Heart left ventricle (tissue), 16 donors: ENCODE measurements at regions of chr19 and their contacts with region 1.

Region 1: DNA sequence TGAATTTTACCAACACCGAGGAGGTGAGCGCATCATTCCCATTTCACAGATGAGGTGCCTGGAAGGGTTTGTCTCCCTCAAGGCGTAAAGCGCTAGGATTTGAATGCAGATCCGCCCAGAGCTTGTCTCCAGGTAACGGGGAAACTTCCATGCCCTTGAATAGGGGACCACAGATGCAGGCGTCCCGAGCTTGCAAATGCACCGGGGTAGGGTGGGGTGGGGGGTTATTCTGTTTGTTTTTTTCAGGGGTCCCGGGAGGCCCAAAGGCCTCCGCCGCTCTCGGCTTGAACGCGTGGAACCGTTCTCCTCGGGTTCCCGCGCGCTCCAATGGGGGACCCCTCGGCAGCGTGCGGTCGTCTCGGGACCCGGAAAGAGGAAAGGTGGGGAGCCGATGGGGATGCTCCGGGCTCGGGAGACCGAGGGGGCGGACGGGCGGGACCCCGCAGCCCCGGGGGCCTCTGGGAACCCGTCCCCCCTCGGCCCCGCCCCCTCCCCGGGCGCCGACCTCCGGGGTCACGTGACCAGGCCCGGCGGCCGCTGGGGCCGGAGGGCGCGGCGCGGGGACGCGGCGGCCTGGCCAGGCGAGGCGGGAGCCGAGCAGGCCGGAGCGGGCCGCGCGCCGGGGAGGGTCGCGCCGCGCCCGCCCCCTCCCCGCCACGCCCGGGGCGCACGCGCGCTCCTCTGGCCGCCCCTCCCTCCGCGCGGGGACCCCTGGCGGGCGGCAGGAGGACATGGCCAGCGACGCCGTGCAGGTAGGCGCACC is at the start of gene PKN1:
- DNase-seq: peak; percentile 71 to 84 (median 79)
- ATAC-seq: peak; percentile 15 to 65 (median 48)
- H3K4me3 ChIP-seq: peak within 1 kb of the TSS; percentile 72 to 98 (median 90)
- H3K27ac ChIP-seq: peak within 1 kb of the TSS; percentile 74 to 98 (median 93)
- H3K4me1 ChIP-seq: peaks cover 0 to 58% (median 32%) of the 10 kb centered on the region in 12 donors
- H3K27me3 ChIP-seq: no peaks in the 10 kb centered on the region
- CTCF ChIP-seq: peak in 2 of 12 donors; percentile 3 to 15
- POLR2A ChIP-seq: peak in 1 of 2 donors; percentile 24
- total RNA-seq, gene PKN1: 119 to 206 (median 136) TPM

Region 2: GRCh38 chr19:14325863-14326262 is 107.1 kb before region 1 on chr19:
- intact Hi-C with region 1: no loop called
- DNase-seq: no peak
- ATAC-seq: no peak
- H3K4me3 ChIP-seq: no peak overlapping the region
- H3K27ac ChIP-seq: no peak overlapping the region
- H3K4me1 ChIP-seq: no peaks in the 10 kb centered on the region
- H3K27me3 ChIP-seq: peaks cover 0 to 3% (median 0%) of the 10 kb centered on the region in 9 donors
- CTCF ChIP-seq: no peak
- POLR2A ChIP-seq: no peak

Region 3: DNA sequence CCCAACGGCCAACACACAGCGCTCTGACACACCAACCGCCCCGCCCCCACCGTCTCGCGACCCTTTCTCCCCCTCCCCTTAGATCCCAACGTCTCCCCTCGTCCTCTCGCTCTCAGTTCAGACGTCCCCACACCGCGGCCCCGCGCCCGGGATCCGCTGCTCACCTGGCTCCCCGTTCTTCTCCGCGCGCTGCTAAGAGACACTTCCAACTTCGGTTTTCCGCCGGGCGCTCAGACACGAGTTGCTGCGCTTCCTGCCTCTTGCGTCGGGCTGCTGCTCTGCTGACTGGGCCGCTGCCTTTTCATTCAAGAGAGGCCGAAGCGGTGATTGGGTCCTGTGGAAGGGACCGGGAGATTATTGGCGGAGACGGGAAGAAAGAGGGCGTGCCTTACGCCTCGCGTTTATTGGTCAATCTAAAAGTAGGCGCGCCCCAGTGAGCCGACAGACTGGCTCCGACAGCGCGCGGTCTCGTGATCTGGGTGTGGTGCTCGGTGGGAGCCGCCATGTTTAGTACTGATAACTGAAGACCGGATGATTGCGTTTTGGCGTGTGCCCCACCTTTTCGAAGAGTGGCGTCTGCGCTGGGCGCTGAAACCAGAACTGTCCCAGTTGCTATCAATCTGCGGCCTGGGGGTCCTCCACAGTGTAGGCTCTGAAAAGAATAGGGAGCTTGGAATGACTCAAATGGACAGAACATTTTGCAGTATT is 13.7 kb before region 1 on chr19 and contains the start of gene DDX39A:
- intact Hi-C with region 1: loop called in 1 of 10 experiments (anchors 2 kb)
- DNase-seq: peak; percentile 98 to 99 (median 99)
- ATAC-seq: peak; percentile 98 to 99 (median 98)
- H3K4me3 ChIP-seq: peak within 1 kb of the TSS; percentile 77 to 98 (median 92)
- H3K27ac ChIP-seq: peak within 1 kb of the TSS; percentile 55 to 95 (median 88)
- H3K4me1 ChIP-seq: peaks cover 0 to 62% (median 27%) of the 10 kb centered on the region in 12 donors
- H3K27me3 ChIP-seq: no peaks in the 10 kb centered on the region
- CTCF ChIP-seq: no peak
- POLR2A ChIP-seq: peak in 1 of 2 donors; percentile 50
- total RNA-seq, gene DDX39A: 18.0 to 44.4 (median 30.2) TPM

Region 4: DNA sequence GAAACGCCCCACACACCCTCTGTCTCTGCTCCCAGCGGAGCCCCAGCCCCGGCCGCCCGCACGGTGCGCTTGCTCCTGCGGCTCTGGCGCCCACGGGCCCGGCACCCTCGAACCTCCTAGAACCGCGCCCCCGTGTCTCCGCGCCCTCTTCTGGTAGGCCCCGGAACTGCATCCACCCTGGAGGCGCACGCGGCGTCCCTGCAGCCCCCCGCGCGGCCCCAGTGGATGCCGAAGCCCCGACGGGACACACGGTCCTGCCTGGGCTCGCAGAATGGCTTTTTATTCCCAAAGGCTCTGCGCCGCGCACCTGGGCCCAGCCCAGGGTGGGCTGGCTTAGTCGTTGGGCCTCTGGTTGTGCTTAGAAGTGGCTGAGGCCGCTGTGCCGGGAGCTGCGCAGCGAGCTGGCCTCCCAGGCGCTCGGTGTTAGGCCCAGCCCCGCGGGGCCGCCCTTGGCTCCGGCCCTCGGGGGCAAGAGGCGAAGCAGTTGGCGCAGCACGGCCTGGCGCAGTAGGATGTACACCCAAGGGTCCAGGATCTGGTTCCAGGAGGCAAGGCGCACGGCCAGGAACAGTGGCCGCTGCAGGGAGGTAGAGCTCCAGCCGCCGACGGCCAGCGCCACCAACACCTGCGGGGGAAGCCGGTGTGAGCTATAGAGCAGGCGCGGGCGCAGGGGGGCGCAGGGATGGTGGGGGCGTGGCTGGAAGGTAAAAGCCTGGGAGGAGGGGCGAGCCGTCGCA is 39.4 kb after region 1 on chr19:
- intact Hi-C with region 1: loop called in 4 of 10 experiments (anchors 5 kb)
- DNase-seq: peak; percentile 72 to 89 (median 74)
- ATAC-seq: peak in 3 of 4 donors; percentile 46 to 61 (median 56)
- H3K4me3 ChIP-seq: peak overlapping the region in 8 of 12 donors; percentile 5 to 37 (median 22)
- H3K27ac ChIP-seq: no peak overlapping the region
- H3K4me1 ChIP-seq: peaks cover 4 to 52% (median 22%) of the 10 kb centered on the region in 12 donors
- H3K27me3 ChIP-seq: peaks cover 0 to 39% (median 16%) of the 10 kb centered on the region in 9 donors
- CTCF ChIP-seq: peak; percentile 96 to 99 (median 97)
- POLR2A ChIP-seq: no peak

Region 5: DNA sequence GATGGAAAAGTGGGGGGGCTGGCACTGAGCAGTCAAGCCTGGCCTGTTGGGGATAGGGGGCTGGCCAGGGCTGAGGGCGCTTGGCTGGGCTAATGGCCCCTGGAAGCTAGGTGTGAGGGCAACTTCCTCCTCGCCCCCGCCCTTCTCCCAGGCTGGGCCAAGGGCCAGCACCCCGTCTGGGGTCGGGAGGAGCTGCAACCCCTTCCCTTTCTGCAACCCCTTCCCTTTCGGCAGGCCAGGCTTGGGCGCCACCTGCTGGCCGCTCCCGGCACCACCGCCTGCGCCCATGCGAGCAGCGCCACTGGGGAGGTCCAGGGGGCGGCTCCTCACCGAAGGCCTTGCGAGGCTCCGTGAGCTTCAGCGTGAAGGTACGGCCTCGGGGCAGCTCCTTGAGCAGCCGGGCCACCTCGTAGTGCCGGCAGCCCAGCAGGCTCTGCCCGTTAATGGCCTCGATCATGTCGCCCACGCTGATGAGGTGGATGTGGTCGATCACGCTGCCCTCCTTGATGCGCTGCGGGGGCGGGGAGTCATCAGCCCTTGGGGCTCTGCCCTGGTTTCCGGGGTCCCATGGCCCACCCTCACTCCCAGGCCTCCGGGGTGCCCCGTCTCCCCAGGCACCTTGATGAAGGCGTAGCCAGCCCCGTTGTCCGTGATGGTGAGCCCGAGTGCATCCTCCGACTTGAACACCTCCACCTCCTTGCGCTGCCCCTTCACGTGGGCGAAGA is 47.2 kb after region 1 on chr19:
- intact Hi-C with region 1: loop called in 1 of 10 experiments (anchors 5 kb)
- DNase-seq: peak in 1 of 5 donors; percentile 76
- ATAC-seq: peak in 3 of 4 donors; percentile 33 to 40 (median 38)
- H3K4me3 ChIP-seq: no peak overlapping the region
- H3K27ac ChIP-seq: no peak overlapping the region
- H3K4me1 ChIP-seq: peaks cover 0 to 26% (median 11%) of the 10 kb centered on the region in 12 donors
- H3K27me3 ChIP-seq: peaks cover 0 to 9% (median 5%) of the 10 kb centered on the region in 9 donors
- CTCF ChIP-seq: peak; percentile 61 to 92 (median 70)
- POLR2A ChIP-seq: no peak

Region 6: DNA sequence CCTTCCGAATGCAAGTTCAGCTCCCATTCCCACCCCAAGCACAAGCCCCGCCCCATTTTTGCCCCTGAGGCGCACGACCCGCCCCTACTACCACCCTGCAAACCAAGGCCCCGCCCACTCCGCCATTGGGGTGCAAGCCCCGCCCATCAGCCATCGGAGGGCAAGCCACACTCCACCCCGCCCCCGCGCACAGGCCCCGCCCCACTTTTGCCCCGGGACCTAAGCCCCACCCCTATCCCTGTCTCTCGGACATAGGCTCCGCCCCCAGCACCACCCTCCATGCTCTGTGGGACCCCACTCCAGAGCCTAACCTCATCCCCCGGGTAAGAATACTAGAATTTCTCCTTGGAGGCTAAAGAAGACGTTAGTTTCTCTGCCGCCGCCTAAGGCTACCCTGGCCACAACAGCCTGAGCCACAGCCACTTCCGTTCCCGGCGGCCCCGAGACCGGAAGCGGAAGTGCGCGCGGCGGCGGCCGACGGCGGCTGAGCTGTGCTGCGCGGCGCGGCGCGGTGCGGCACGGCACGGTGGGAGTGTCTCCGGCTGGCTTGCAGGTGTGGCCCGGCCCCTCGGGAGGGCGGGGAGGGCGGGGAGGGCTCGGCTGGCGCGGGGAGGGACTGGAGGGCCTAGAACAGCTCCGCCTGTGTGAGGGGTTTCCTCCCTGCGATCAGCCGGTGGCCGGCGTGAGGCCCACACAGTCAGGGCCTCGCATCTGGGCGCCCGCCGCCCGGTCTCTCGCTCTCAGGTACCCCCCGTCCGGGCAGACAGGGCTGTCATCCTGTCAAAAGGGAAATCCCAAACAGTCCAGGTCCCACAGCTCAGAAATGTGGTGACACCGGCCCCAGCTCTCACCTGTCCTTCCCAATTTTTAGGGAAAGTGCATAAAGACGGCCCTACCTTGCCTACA is 256.9 kb after region 1 on chr19 and contains the start of gene ZNF333:
- intact Hi-C with region 1: loop called in 1 of 10 experiments (anchors 5 kb)
- DNase-seq: peak; percentile 96 to 99 (median 97)
- ATAC-seq: peak; percentile 98 to 100 (median 99)
- H3K4me3 ChIP-seq: peak within 1 kb of the TSS; percentile 61 to 100 (median 86)
- H3K27ac ChIP-seq: peak within 1 kb of the TSS; percentile 85 to 100 (median 94)
- H3K4me1 ChIP-seq: peaks cover 0 to 25% (median 12%) of the 10 kb centered on the region in 12 donors
- H3K27me3 ChIP-seq: no peaks in the 10 kb centered on the region
- CTCF ChIP-seq: no peak
- POLR2A ChIP-seq: peak in 1 of 2 donors; percentile 60
- total RNA-seq, gene ZNF333: 6.7 to 12.1 (median 8.6) TPM